Activated naive CD4-positive, alpha-beta T cell treated with anti-CD3 and anti-CD28 coated beads for 36 hours (primary cell): ENCODE measurements at regions of chr10 and their contacts with region 1.

Region 1: GRCh38 chr10:62050893-62051433 is 149.5 kb downstream of the ARID5B start:
- DNase-seq: peak; percentile 91
- H3K4me3 Mint-ChIP-seq: peak overlapping the region; percentile 94
- H3K27ac Mint-ChIP-seq: peak overlapping the region; percentile 100
- H3K4me1 Mint-ChIP-seq: peaks cover 87% of the 10 kb centered on the region
- H3K27me3 Mint-ChIP-seq: no peaks in the 10 kb centered on the region

Region 2: DNA sequence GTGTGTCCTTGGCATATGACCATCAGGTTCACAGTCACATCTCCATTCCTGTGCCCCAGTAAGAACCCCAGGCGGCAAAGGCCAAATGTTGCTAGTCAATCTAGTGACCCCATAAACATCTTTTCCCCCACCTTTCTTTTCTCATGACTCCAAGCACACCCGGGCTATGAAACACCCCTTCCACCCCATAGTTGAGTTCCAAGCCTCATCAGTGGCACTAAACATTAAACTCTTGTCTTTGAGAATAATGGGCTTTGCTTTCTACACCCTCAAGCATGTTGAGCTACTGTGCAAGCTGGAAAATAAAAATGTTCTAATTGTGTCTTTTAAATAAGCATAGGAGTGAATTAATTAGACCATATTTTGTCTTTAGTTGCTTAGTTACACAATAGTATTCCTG is 140.1 kb before region 1 on chr10:
- CTCF ChIA-PET with region 1: no interaction called
- intact Hi-C with region 1: no loop called
- DNase-seq: no peak
- H3K4me3 Mint-ChIP-seq: no peak overlapping the region
- H3K27ac Mint-ChIP-seq: no peak overlapping the region
- H3K4me1 Mint-ChIP-seq: peaks cover 55% of the 10 kb centered on the region
- H3K27me3 Mint-ChIP-seq: no peaks in the 10 kb centered on the region

Region 3: GRCh38 chr10:61937631-61938351 is 113.2 kb before region 1 on chr10:
- CTCF ChIA-PET with region 1: interaction called, 12 read pairs
- intact Hi-C with region 1: no loop called
- DNase-seq: no peak
- H3K4me3 Mint-ChIP-seq: peak overlapping the region; percentile 40
- H3K27ac Mint-ChIP-seq: peak overlapping the region; percentile 93
- H3K4me1 Mint-ChIP-seq: peaks cover 92% of the 10 kb centered on the region
- H3K27me3 Mint-ChIP-seq: no peaks in the 10 kb centered on the region

Region 4: DNA sequence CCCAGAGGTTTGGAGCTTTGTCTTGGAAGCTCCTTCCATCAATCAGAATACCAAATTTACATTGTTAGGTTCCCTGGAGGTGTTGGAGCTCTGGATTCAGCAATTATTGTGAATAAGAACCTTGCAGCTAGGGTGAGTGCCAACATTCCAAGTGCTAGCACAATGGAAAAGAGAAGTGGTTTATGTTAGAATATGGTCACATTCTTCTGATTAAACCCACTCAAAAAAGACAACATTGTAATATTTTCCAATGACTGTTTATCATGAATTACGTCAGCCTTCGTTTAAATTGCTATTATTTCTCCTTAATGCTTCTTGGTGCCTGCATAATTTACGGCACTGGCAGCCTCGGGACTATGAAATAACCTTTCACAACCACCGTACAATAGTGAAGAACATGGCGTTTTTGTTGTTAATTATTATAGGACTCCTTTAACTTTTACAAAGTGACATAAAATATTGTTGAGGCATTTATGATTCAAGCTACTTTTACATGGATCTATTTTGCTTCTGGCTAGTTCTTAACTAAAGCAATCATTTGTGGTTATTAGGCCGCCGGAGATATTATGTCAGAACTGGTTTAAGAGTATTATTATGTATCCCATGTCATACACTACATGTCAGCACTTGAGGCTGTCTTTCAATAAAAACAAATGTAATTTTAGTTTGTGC is 31.8 kb before region 1 on chr10:
- CTCF ChIA-PET with region 1: interaction called, 11 read pairs
- intact Hi-C with region 1: loop called (anchors 1 kb)
- DNase-seq: no peak
- H3K4me3 Mint-ChIP-seq: peak overlapping the region; percentile 39
- H3K27ac Mint-ChIP-seq: peak overlapping the region; percentile 99
- H3K4me1 Mint-ChIP-seq: peaks cover 90% of the 10 kb centered on the region
- H3K27me3 Mint-ChIP-seq: no peaks in the 10 kb centered on the region

Region 5: DNA sequence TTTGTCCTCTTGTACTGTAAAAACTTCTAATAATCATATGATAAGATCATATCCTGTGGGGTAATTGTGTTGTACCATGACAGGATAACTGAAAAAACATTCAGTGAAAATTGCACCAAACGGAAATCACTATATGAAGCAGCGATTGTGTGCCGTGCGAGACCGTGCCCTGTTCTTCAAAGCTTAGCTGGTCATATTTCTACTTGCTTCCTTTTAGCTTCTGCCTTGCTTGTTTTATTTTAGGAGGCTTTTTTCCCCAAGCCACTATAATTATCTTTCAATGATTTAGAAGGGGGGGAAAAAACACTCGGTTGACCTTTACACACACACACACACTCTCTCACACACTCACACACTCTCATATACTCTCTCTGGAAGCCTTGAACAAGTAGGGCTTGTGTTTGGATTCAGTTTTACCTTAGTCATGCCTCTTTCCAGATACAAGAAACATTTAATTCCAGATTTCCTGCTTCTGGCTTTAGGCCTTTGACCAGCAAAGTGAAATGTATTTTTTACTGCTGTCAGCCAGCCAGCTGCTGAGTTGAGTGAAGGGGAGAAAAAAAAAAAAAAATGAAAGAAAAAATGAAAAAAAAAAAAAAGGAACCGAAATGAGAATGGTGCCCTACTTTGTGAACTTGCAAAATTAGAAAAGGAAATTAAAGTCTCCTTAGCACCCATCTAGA is 31.9 kb after region 1 on chr10:
- CTCF ChIA-PET with region 1: no interaction called
- intact Hi-C with region 1: loop called (anchors 1 kb)
- DNase-seq: peak; percentile 80
- H3K4me3 Mint-ChIP-seq: peak overlapping the region; percentile 41
- H3K27ac Mint-ChIP-seq: peak overlapping the region; percentile 89
- H3K4me1 Mint-ChIP-seq: peaks cover 86% of the 10 kb centered on the region
- H3K27me3 Mint-ChIP-seq: no peaks in the 10 kb centered on the region

Region 6: GRCh38 chr10:62426086-62426485 is 375.1 kb after region 1 on chr10:
- CTCF ChIA-PET with region 1: no interaction called
- intact Hi-C with region 1: loop called (anchors 1 kb)
- DNase-seq: peak; percentile 64
- H3K4me3 Mint-ChIP-seq: no peak overlapping the region
- H3K27ac Mint-ChIP-seq: peak overlapping the region; percentile 12
- H3K4me1 Mint-ChIP-seq: peaks cover 28% of the 10 kb centered on the region
- H3K27me3 Mint-ChIP-seq: no peaks in the 10 kb centered on the region

Region 7: GRCh38 chr10:63268798-63269503 is 1218.0 kb after region 1 on chr10:
- CTCF ChIA-PET with region 1: no interaction called
- intact Hi-C with region 1: loop called (anchors 5 kb)
- DNase-seq: peak; percentile 91
- H3K4me3 Mint-ChIP-seq: peak overlapping the region; percentile 88
- H3K27ac Mint-ChIP-seq: peak overlapping the region; percentile 98
- H3K4me1 Mint-ChIP-seq: peaks cover 22% of the 10 kb centered on the region
- H3K27me3 Mint-ChIP-seq: no peaks in the 10 kb centered on the region